Tibial artery (tissue), 4 donors: ENCODE measurements at regions of chr19 and their contacts with region 1.

Region 1: GRCh38 chr19:58278157-58279041 is at the start of gene ZNF8:
- DNase-seq: peak; percentile 96 to 98
- H3K4me3 ChIP-seq: peak within 1 kb of the TSS; percentile 77 to 95
- H3K27ac ChIP-seq: peak within 1 kb of the TSS; percentile 86 to 90
- H3K4me1 ChIP-seq: peaks cover 0 to 29% (median 8%) of the 10 kb centered on the region in 4 donors
- H3K27me3 ChIP-seq: no peaks in the 10 kb centered on the region
- CTCF ChIP-seq: no peak

Region 2: GRCh38 chr19:58042495-58043340 is 235.7 kb before region 1 on chr19:
- intact Hi-C with region 1: no loop called
- DNase-seq: no peak
- H3K4me3 ChIP-seq: no peak overlapping the region
- H3K27ac ChIP-seq: no peak overlapping the region
- H3K4me1 ChIP-seq: no peaks in the 10 kb centered on the region
- H3K27me3 ChIP-seq: peaks cover 0 to 14% of the 10 kb centered on the region in 2 donors
- CTCF ChIP-seq: no peak

Region 3: DNA sequence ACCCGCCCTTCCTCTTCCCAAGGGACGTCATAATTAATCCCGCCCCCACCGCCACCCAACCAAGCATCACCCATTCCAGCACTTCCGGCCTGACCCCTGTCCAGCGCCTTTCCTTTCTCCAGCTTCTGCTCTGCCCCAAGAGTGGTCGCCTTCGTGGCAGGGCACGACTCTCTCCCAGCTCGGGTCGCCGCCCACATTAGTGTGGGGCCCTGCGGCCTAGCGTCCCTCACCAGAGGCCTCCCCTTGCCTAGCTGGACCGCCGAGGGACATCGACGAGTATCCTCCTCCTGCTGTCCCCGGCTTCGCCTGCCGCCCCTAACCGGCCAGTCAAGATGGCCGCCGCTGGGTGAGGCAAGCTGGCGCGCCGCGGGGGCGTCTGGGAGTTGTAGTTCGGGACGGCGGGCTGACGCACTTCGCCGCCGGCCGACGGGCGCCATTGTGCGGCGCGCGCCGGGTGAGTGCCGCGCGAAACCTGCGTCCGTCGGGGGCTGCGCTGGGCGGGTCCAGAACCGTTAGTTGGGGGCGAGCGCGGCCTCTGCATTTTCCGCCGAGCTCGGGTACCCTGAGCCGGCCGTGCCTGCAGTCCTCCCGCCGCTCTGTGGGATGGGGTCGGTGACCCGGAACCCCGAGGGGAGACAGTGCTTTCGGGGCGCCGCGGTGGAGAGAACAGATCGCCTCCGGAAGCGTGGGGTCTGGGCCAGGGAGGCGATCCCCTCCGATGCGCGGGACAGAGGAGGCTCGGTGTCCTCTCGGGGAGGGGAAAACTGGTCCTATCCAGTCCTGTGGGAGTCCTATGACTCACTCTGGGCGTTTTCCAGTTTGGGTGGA is 95.2 kb before region 1 on chr19 and contains the start of gene ZNF274:
- intact Hi-C with region 1: loop called (anchors 10 kb)
- DNase-seq: peak; percentile 87 to 94
- H3K4me3 ChIP-seq: peak within 1 kb of the TSS; percentile 71 to 88
- H3K27ac ChIP-seq: peak within 1 kb of the TSS; percentile 92 to 98
- H3K4me1 ChIP-seq: peaks cover 0 to 8% (median 4%) of the 10 kb centered on the region in 4 donors
- H3K27me3 ChIP-seq: no peaks in the 10 kb centered on the region
- CTCF ChIP-seq: no peak